IMR-90 (cell line): ENCODE measurements at regions of chr7 and their contacts with region 1.

Region 1: DNA sequence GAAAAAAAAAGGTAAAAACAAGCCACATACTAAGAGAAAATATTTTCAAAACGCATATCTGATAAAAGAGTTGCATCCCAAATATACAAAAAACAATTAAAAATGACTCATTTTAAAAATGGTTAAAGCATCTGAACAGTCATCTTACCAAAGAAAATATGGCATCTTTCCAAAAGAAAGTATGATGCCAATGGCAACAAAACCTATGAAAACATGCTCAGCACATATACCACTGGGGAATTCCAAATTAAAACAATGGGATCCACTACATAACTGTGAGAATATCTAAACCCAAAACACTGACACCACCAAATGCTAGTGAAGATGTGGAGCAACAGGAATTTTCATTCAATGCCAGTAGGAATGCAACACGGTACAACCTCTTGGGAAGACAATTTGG is 39.3 kb downstream of the VSTM2A start:
- DNase-seq: no peak
- ATAC-seq: no peak
- H3K4me3 ChIP-seq: no peak overlapping the region
- H3K27ac ChIP-seq: no peak overlapping the region
- H3K4me1 ChIP-seq: no peaks in the 10 kb centered on the region
- H3K27me3 ChIP-seq: no peaks in the 10 kb centered on the region
- CTCF ChIP-seq: no peak
- POLR2A ChIP-seq: no peak
- RAD21 ChIP-seq: no peak

Region 2: GRCh38 chr7:54615537-54615936 is 34.0 kb after region 1 on chr7:
- CTCF ChIA-PET with region 1: no interaction called
- POLR2A ChIA-PET with region 1: no interaction called
- dilution Hi-C with region 1: no loop called
- in situ Hi-C with region 1: no loop called
- intact Hi-C with region 1: no loop called
- DNase-seq: no peak
- ATAC-seq: no peak
- H3K4me3 ChIP-seq: no peak overlapping the region
- H3K27ac ChIP-seq: no peak overlapping the region
- H3K4me1 ChIP-seq: no peaks in the 10 kb centered on the region
- H3K27me3 ChIP-seq: no peaks in the 10 kb centered on the region
- CTCF ChIP-seq: no peak
- POLR2A ChIP-seq: no peak
- RAD21 ChIP-seq: no peak

Region 3: GRCh38 chr7:54629771-54630170 is 48.3 kb after region 1 on chr7:
- CTCF ChIA-PET with region 1: no interaction called
- POLR2A ChIA-PET with region 1: no interaction called
- dilution Hi-C with region 1: no loop called
- in situ Hi-C with region 1: no loop called
- intact Hi-C with region 1: loop called (anchors 1 kb)
- DNase-seq: no peak
- ATAC-seq: no peak
- H3K4me3 ChIP-seq: no peak overlapping the region
- H3K27ac ChIP-seq: no peak overlapping the region
- H3K4me1 ChIP-seq: no peaks in the 10 kb centered on the region
- H3K27me3 ChIP-seq: no peaks in the 10 kb centered on the region
- CTCF ChIP-seq: no peak
- POLR2A ChIP-seq: no peak
- RAD21 ChIP-seq: no peak

Region 4: GRCh38 chr7:54888067-54888733 is 306.7 kb after region 1 on chr7:
- CTCF ChIA-PET with region 1: no interaction called
- POLR2A ChIA-PET with region 1: no interaction called
- dilution Hi-C with region 1: no loop called
- in situ Hi-C with region 1: no loop called
- intact Hi-C with region 1: no loop called
- DNase-seq: no peak
- ATAC-seq: peak; percentile 24; the same call in 1 of the 2 replicates
- H3K4me3 ChIP-seq: peak overlapping the region; percentile 6
- H3K27ac ChIP-seq: no peak overlapping the region
- H3K4me1 ChIP-seq: peaks cover 8% of the 10 kb centered on the region; the same call in 1 of the 2 replicates
- H3K27me3 ChIP-seq: no peaks in the 10 kb centered on the region
- CTCF ChIP-seq: no peak
- POLR2A ChIP-seq: no peak
- RAD21 ChIP-seq: no peak